ENCODE measurements at regions of chr2 and their contacts with region 1.

Region 1: GRCh38 chr2:203814661-203815540 is 52.7 kb upstream of the CTLA4 start:
- DNase-seq: no peak
- ATAC-seq: peak; percentile 76
- H3K4me3 Mint-ChIP-seq: no peak overlapping the region
- H3K27ac Mint-ChIP-seq: no peak overlapping the region
- H3K4me1 Mint-ChIP-seq: peaks cover 8% of the 10 kb centered on the region
- H3K27me3 Mint-ChIP-seq: peaks cover 61% of the 10 kb centered on the region
- CTCF ChIP-seq: no peak

Region 2: DNA sequence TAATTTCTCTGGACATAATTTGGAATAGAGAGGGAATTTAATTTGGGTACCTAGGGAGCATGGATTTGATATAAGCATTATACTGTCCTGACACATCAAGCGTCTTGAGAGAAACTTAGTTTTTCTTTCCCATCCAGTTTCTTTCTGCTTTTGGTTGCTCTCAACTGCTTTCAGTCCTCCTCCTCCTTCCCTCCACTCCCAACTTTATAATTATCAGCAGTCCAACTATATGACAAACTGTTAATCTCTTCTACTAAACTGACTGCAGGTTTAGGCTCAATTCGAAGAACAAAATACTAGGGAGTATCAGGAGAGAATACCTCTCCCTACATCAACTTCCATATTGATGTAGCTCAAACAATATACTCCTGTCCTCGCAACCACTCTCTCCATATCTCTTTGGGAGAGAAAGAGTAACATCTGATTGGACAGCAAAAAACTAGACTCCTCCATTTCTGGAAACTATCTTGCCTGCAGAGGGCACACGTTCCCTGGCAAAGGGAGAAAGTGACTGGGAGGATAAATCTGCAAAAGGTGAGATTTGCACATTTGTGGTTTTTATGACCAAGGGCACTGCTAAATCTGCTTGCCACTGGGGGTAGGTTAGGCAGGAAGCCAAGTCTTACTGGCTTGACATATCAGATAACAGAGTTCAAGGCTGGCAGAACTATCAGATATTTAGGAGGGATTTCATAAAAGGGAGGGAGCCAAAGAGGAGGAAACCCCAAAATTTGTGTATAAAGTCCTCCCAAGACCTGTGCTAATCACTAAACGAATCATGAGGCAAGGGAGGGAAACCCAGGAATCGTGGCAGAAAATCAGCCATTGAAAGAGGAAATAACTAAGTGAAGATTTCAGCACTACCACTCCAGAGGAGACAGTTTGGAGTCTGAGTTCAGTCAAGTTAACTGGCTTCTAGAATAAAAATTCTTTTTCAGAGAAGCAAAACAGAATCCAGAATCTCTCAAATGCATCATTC is 983.4 kb before region 1 on chr2:
- CTCF ChIA-PET with region 1: no interaction called
- POLR2A ChIA-PET with region 1: no interaction called
- intact Hi-C with region 1: loop called (anchors 2 kb)
- DNase-seq: no peak
- ATAC-seq: peak; percentile 58
- H3K4me3 Mint-ChIP-seq: no peak overlapping the region
- H3K27ac Mint-ChIP-seq: no peak overlapping the region
- H3K4me1 Mint-ChIP-seq: peaks cover 9% of the 10 kb centered on the region
- H3K27me3 Mint-ChIP-seq: no peaks in the 10 kb centered on the region
- CTCF ChIP-seq: no peak

Region 3: DNA sequence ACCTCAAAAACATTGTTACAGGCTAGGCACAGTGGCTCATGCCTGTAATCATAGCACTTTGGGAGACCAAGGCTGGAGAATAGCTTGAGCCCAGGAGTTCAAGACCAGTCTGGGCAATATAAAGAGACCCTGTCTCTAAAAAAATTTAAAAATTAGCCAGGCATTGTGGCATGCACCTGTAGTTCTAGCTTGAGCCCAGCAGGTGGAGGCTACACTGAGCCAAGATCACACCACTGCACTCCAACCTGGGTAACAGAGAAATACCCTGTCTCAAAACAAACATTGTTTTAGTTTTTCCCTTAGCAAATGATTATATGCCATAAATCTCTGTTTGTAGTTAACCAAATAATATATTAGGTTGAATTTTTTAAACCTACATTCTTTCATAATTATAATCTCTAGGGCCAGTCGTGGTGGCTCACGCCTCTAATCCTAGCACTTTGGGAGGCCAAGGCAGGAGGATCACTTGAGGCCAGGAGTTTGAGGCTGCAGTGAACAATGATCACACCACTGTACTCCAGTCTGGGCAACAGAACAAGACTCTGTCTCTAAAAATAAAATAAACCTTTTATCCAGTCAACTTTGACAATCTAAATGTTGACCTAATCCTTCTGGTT is 589.4 kb before region 1 on chr2:
- CTCF ChIA-PET with region 1: interaction called, 13 read pairs
- POLR2A ChIA-PET with region 1: no interaction called
- intact Hi-C with region 1: loop called (anchors 1 kb)
- DNase-seq: no peak
- ATAC-seq: peak; percentile 78
- H3K4me3 Mint-ChIP-seq: no peak overlapping the region
- H3K27ac Mint-ChIP-seq: no peak overlapping the region
- H3K4me1 Mint-ChIP-seq: no peaks in the 10 kb centered on the region
- H3K27me3 Mint-ChIP-seq: no peaks in the 10 kb centered on the region
- CTCF ChIP-seq: peak; percentile 65

Region 4: GRCh38 chr2:203453858-203454451 is 360.9 kb before region 1 on chr2:
- CTCF ChIA-PET with region 1: no interaction called
- POLR2A ChIA-PET with region 1: no interaction called
- intact Hi-C with region 1: loop called (anchors 1 kb)
- DNase-seq: no peak
- ATAC-seq: peak; percentile 28
- H3K4me3 Mint-ChIP-seq: no peak overlapping the region
- H3K27ac Mint-ChIP-seq: no peak overlapping the region
- H3K4me1 Mint-ChIP-seq: no peaks in the 10 kb centered on the region
- H3K27me3 Mint-ChIP-seq: peaks cover 4% of the 10 kb centered on the region
- CTCF ChIP-seq: peak; percentile 72

Region 5: GRCh38 chr2:203484266-203485112 is 330.4 kb before region 1 on chr2:
- CTCF ChIA-PET with region 1: no interaction called
- POLR2A ChIA-PET with region 1: no interaction called
- intact Hi-C with region 1: loop called (anchors 1 kb)
- DNase-seq: no peak
- ATAC-seq: no peak
- H3K4me3 Mint-ChIP-seq: no peak overlapping the region
- H3K27ac Mint-ChIP-seq: no peak overlapping the region
- H3K4me1 Mint-ChIP-seq: no peaks in the 10 kb centered on the region
- H3K27me3 Mint-ChIP-seq: peaks cover 1% of the 10 kb centered on the region
- CTCF ChIP-seq: no peak

Region 6: GRCh38 chr2:203909261-203909967 is 94.5 kb after region 1 on chr2:
- CTCF ChIA-PET with region 1: interaction called, 3 read pairs
- POLR2A ChIA-PET with region 1: no interaction called
- intact Hi-C with region 1: loop called (anchors 5 kb)
- DNase-seq: no peak
- ATAC-seq: peak; percentile 28
- H3K4me3 Mint-ChIP-seq: no peak overlapping the region
- H3K27ac Mint-ChIP-seq: no peak overlapping the region
- H3K4me1 Mint-ChIP-seq: peaks cover 12% of the 10 kb centered on the region
- H3K27me3 Mint-ChIP-seq: peaks cover 12% of the 10 kb centered on the region
- CTCF ChIP-seq: no peak